ENCODE measurements at regions of chr2 and their contacts with region 1.

Region 1: GRCh38 chr2:218671654-218672566 is at the starts of genes RNF25 and STK36:
- DNase-seq: peak; percentile 88
- H3K27ac ChIP-seq: peak within 1 kb of the TSS; percentile 85
- CTCF ChIP-seq: no peak

Region 2: DNA sequence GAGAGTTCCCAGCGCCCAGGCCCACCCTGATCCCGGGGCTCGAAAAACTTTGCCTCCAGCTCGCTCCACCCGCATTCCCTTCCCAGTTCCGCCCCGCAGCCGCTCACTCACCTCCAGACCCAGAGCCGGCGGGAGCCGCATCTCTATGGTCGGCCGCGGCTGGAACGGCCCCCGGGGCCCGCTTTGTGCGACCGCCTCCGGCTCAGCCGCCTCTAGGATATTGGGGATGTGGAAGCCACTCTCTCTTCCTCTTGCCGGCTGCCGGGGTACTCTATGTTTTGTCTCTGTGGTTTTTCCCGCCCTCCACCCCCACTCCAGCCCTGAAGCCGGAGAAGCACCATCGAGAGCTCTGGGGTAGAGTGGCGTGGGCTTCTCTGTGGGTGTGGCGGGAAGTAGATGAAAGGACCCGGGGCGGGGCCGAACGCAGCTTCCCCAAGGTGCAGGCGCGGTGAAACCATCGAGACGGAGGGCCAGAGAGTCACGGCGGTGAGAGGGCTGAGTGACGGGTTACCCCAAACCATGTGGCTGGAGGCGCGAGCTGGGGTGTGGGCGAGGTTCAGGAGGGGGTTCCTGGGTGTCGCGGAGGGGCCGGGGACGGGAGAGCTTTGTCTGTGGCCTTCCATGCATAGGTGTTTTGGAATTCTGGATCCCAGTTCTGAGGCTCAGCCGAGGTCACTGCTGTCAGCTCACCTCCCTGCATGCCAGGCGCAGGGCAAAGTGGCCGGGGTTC is 12.5 kb before region 1 on chr2 and contains the starts of genes BCS1L and ZNF142:
- CTCF ChIA-PET with region 1: interaction called, 6 read pairs
- POLR2A ChIA-PET with region 1: interaction called, 21 read pairs
- DNase-seq: peak; percentile 95
- H3K27ac ChIP-seq: peak within 1 kb of the TSS; percentile 84
- CTCF ChIP-seq: no peak